B cell (primary cell): ENCODE measurements at regions of chr4 and their contacts with region 1.

Region 1: GRCh38 chr4:185142912-185143595 is at the start of gene SLC25A4:
- DNase-seq: peak; percentile 94
- ATAC-seq: peak; percentile 98
- H3K4me3 ChIP-seq: peak within 1 kb of the TSS; percentile 55 to 83 (median 81)
- H3K4me3 Mint-ChIP-seq: peak within 1 kb of the TSS; percentile 97
- H3K27ac ChIP-seq: peak within 1 kb of the TSS; percentile 66 to 76
- H3K27ac Mint-ChIP-seq: peak within 1 kb of the TSS; percentile 90
- H3K4me1 ChIP-seq: peaks cover 13% of the 10 kb centered on the region in 2 donors
- H3K4me1 Mint-ChIP-seq: peaks cover 15% of the 10 kb centered on the region
- H3K27me3 ChIP-seq: peaks cover 0 to 4% (median 0%) of the 10 kb centered on the region in 4 experiments
- H3K27me3 Mint-ChIP-seq: peaks cover 8% of the 10 kb centered on the region
- CTCF ChIP-seq: peak; percentile 76
- total RNA-seq, gene SLC25A4: 7.3 and 8.2 TPM in 2 replicates

Region 2: GRCh38 chr4:184649026-184649970 is 493.8 kb before region 1 on chr4 and contains the starts of genes CASP3 and PRIMPOL:
- CTCF ChIA-PET with region 1: no interaction called
- POLR2A ChIA-PET with region 1: no interaction called
- intact Hi-C with region 1: loop called (anchors 2 kb)
- DNase-seq: peak; percentile 97
- ATAC-seq: peak; percentile 95
- H3K4me3 ChIP-seq: peak within 1 kb of the TSS; percentile 75 to 95 (median 89)
- H3K4me3 Mint-ChIP-seq: peak within 1 kb of the TSS; percentile 94
- H3K27ac ChIP-seq: peak within 1 kb of the TSS; percentile 71 to 95
- H3K27ac Mint-ChIP-seq: peak within 1 kb of the TSS; percentile 94
- H3K4me1 ChIP-seq: peaks cover 24 to 29% of the 10 kb centered on the region in 2 donors
- H3K4me1 Mint-ChIP-seq: peaks cover 44% of the 10 kb centered on the region
- H3K27me3 ChIP-seq: no peaks in the 10 kb centered on the region
- H3K27me3 Mint-ChIP-seq: no peaks in the 10 kb centered on the region
- CTCF ChIP-seq: peak; percentile 18
- total RNA-seq, gene CASP3: 15.8 and 16.8 TPM in 2 replicates
- total RNA-seq, gene PRIMPOL: 15.4 and 21.5 TPM in 2 replicates

Region 3: DNA sequence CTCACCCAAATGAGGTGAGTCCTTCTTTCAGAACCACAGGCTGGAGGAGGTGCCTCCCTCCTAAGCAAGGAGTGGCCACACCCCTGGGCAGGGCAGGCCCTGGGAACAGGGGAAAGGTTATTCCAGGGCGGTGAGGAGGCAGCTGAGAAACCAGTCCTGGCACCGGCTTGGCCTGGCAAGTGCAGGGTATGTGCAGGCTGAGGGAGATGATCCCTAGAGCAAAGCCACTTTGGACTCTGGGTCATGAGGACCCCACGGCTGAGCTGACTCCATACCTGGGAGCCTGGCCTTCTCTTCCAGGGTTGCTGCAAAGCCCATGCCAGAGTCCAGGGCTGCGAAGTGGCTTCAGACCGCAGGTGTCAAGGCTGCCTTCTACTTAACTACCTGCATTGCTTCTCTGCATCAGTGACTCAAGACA is 174.3 kb before region 1 on chr4:
- CTCF ChIA-PET with region 1: no interaction called
- POLR2A ChIA-PET with region 1: no interaction called
- intact Hi-C with region 1: no loop called
- DNase-seq: no peak
- ATAC-seq: no peak
- H3K4me3 ChIP-seq: no peak overlapping the region
- H3K4me3 Mint-ChIP-seq: no peak overlapping the region
- H3K27ac ChIP-seq: no peak overlapping the region
- H3K27ac Mint-ChIP-seq: no peak overlapping the region
- H3K4me1 ChIP-seq: no peaks in the 10 kb centered on the region
- H3K4me1 Mint-ChIP-seq: peaks cover 2% of the 10 kb centered on the region
- H3K27me3 ChIP-seq: peaks cover 0 to 2% (median 0%) of the 10 kb centered on the region in 4 experiments
- H3K27me3 Mint-ChIP-seq: peaks cover 16% of the 10 kb centered on the region
- CTCF ChIP-seq: no peak

Region 4: GRCh38 chr4:185183619-185184281 is 40.7 kb after region 1 on chr4:
- CTCF ChIA-PET with region 1: interaction called, 12 read pairs
- POLR2A ChIA-PET with region 1: no interaction called
- intact Hi-C with region 1: loop called (anchors 5 kb)
- DNase-seq: peak; percentile 85
- ATAC-seq: peak; percentile 69
- H3K4me3 ChIP-seq: no peak overlapping the region
- H3K4me3 Mint-ChIP-seq: no peak overlapping the region
- H3K27ac ChIP-seq: no peak overlapping the region
- H3K27ac Mint-ChIP-seq: no peak overlapping the region
- H3K4me1 ChIP-seq: no peaks in the 10 kb centered on the region
- H3K4me1 Mint-ChIP-seq: peaks cover 6% of the 10 kb centered on the region
- H3K27me3 ChIP-seq: no peaks in the 10 kb centered on the region
- H3K27me3 Mint-ChIP-seq: no peaks in the 10 kb centered on the region
- CTCF ChIP-seq: peak; percentile 92

Region 5: DNA sequence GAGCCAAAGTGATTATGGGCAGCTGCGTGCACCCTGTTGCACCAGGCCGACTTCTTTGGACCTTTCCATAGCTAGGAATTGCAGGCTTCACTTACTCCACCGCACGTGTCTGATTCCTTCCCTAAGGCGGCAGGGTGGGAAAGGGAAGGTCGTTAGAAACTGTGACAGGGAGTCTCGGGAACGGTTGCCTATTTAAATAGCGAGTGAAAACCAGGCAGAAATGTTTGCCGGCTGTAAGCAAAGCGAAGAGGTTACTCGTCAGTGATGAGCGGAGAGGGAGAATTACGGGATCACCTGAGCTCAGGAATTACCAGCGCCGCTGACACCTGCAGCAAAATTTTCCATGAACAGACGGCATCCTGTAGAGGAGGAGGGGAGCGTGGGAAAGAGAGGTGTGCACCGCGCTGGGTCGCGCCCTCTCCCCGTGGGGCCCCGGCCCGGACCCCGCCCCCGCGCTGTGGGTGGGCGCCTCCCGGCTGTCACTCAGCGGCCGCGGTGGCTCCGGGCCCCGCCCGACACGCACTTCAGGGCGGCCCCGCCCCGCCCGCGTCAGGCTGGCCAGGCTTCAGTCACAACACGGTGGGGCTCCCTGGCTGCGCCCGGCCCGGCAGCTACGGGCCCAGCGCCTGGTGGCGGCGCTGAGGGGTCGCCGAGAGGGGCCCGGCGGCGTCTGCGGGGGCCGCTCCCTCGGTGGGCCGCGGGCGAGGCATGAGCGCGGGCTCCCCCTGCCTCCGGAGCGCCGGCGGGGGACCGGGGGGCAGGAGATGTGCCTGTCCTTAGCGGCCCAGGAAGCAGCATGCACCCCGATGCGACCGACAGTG is 66.2 kb after region 1 on chr4 and contains the start of gene SNX25:
- CTCF ChIA-PET with region 1: interaction called, 3 read pairs
- POLR2A ChIA-PET with region 1: interaction called, 4 read pairs
- intact Hi-C with region 1: loop called (anchors 1 kb)
- DNase-seq: peak; percentile 91
- ATAC-seq: peak; percentile 83
- H3K4me3 ChIP-seq: peak within 1 kb of the TSS; percentile 70 to 87 (median 74)
- H3K4me3 Mint-ChIP-seq: peak within 1 kb of the TSS; percentile 99
- H3K27ac ChIP-seq: peak within 1 kb of the TSS; percentile 62 to 73
- H3K27ac Mint-ChIP-seq: peak within 1 kb of the TSS; percentile 97
- H3K4me1 ChIP-seq: peaks cover 56 to 66% of the 10 kb centered on the region in 2 donors
- H3K4me1 Mint-ChIP-seq: peaks cover 65% of the 10 kb centered on the region
- H3K27me3 ChIP-seq: no peaks in the 10 kb centered on the region
- H3K27me3 Mint-ChIP-seq: no peaks in the 10 kb centered on the region
- CTCF ChIP-seq: no peak
- total RNA-seq, gene SNX25: 77.6 and 83.8 TPM in 2 replicates

Region 6: DNA sequence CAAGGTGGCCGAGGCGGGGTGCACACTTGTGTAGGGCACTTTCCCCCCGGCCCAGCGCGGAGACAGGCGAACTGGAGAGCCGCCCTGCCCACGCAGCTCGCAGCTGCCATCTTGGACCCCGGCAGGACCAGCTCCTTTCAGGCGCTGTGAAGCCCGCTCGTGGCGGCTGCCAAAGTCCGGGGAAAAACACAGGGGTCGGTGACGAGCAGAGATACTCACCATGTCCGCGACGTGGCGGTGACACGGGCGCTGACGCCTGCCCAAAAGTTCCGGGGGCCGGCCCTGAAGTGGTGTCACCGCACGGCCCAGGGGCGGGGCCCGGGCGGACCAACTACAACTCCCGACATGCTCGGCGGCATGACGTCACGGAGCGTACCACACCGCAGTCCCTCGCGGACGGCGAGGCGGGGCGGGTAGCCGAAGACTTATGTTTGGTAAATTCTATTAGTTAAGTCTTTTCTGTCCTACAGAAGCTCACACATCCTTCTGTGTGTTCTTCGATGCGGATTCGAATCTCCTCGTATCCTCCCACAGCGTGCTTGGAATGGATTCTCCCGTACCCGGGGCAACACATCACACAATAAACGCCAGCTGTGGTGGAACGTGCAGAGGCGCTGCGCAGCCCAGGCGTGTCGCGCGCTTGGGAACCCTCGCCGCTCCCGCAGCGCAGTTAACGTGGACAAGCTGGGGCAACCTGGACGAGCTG is 282.7 kb after region 1 on chr4 and contains the start of gene UFSP2:
- CTCF ChIA-PET with region 1: interaction called, 6 read pairs
- POLR2A ChIA-PET with region 1: no interaction called
- intact Hi-C with region 1: loop called (anchors 1 kb)
- DNase-seq: peak; percentile 98
- ATAC-seq: peak; percentile 88
- H3K4me3 ChIP-seq: peak within 1 kb of the TSS; percentile 78 to 99 (median 88)
- H3K4me3 Mint-ChIP-seq: peak within 1 kb of the TSS; percentile 86
- H3K27ac ChIP-seq: peak within 1 kb of the TSS; percentile 98 to 100
- H3K27ac Mint-ChIP-seq: peak within 1 kb of the TSS; percentile 99
- H3K4me1 ChIP-seq: peaks cover 13% of the 10 kb centered on the region in 2 donors
- H3K4me1 Mint-ChIP-seq: peaks cover 15% of the 10 kb centered on the region
- H3K27me3 ChIP-seq: no peaks in the 10 kb centered on the region
- H3K27me3 Mint-ChIP-seq: peaks cover 4% of the 10 kb centered on the region
- CTCF ChIP-seq: no peak
- total RNA-seq, gene UFSP2: 20.6 and 24.4 TPM in 2 replicates

Region 7: DNA sequence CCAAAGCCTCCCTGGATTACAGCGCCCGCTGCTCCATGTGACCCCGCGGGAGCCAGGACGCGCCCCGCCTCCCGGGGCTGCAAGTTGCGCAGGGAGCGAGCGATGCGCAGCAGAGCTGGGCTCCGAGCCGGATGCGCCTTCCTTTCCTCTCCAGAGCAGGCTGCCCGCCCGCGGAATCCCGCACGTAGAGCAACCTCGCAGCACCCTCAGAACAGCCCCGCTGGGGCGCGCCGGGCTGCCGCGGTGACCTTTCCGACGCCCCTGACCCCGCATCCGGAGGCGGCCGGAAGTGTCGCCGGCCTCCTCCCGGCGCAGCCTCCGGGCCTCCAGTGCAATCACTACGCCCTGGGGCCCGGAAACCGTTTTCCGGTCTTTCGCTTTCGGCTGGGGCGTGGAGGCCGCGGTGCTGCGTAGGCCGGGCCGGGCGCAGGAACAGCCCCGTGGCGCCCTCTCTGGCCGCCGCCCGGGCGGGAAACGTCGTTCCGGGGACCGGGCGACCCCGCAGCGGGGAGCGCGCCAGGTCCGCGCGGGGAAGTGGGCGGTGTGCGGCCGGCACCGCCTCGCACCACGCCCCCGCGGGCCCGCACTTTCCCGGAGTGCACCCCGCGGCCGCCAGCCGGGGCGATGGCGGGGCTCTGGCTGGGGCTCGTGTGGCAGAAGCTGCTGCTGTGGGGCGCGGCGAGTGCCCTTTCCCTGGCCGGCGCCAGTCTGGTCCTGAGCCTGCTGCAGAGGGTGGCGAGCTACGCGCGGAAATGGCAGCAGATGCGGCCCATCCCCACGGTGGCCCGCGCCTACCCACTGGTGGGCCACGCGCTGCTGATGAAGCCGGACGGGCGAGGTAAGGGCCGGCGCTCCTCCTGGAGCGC is 1048.4 kb after region 1 on chr4 and contains the start of gene CYP4V2:
- CTCF ChIA-PET with region 1: no interaction called
- POLR2A ChIA-PET with region 1: no interaction called
- intact Hi-C with region 1: loop called (anchors 2 kb)
- DNase-seq: peak; percentile 91
- ATAC-seq: peak; percentile 84
- H3K4me3 ChIP-seq: peak within 1 kb of the TSS; percentile 66 to 95 (median 90)
- H3K4me3 Mint-ChIP-seq: peak within 1 kb of the TSS; percentile 94
- H3K27ac ChIP-seq: peak within 1 kb of the TSS; percentile 89 to 91
- H3K27ac Mint-ChIP-seq: peak within 1 kb of the TSS; percentile 96
- H3K4me1 ChIP-seq: peaks cover 17 to 21% of the 10 kb centered on the region in 2 donors
- H3K4me1 Mint-ChIP-seq: peaks cover 27% of the 10 kb centered on the region
- H3K27me3 ChIP-seq: no peaks in the 10 kb centered on the region
- H3K27me3 Mint-ChIP-seq: no peaks in the 10 kb centered on the region
- CTCF ChIP-seq: peak; percentile 51
- total RNA-seq, gene CYP4V2: 18.3 and 19.7 TPM in 2 replicates